PC-9 (cell line): ENCODE measurements at regions of chr4 and their contacts with region 1.

Region 1: GRCh38 chr4:10006231-10006600 is 15.1 kb downstream of the SLC2A9 start:
- DNase-seq: peak; percentile 57 to 96
- H3K4me3 ChIP-seq: peak overlapping the region; percentile 48; the same call in 1 of the 2 replicates
- H3K27ac ChIP-seq: peak overlapping the region; percentile 100
- H3K4me1 ChIP-seq: peaks cover 50% of the 10 kb centered on the region
- H3K27me3 ChIP-seq: no peaks in the 10 kb centered on the region
- CTCF ChIP-seq: no peak

Region 2: DNA sequence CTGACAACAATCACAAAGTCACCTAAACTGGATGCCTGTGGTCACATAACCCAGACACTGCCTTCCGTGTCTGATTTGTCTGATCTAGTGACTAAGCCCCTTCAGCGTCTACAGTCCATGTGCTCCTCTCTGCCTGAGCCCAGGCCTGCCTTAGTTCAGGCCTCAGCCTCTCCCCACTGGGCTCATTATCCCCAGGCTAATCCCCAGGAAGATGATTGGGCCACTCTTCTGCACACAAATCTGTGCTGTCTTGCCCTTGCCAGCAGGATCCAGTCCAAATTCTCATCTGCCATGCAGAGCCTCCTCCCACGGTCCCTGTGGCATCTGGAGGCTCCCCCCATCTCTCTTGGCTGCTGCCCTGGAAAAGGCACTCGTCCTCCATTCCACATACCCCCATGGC is 81.5 kb before region 1 on chr4:
- CTCF ChIA-PET with region 1: no interaction called
- POLR2A ChIA-PET with region 1: no interaction called
- intact Hi-C with region 1: loop called (anchors 5 kb)
- DNase-seq: peak; percentile 3 to 75
- H3K4me3 ChIP-seq: no peak overlapping the region
- H3K27ac ChIP-seq: no peak overlapping the region
- H3K4me1 ChIP-seq: no peaks in the 10 kb centered on the region
- H3K27me3 ChIP-seq: no peaks in the 10 kb centered on the region
- CTCF ChIP-seq: no peak

Region 3: DNA sequence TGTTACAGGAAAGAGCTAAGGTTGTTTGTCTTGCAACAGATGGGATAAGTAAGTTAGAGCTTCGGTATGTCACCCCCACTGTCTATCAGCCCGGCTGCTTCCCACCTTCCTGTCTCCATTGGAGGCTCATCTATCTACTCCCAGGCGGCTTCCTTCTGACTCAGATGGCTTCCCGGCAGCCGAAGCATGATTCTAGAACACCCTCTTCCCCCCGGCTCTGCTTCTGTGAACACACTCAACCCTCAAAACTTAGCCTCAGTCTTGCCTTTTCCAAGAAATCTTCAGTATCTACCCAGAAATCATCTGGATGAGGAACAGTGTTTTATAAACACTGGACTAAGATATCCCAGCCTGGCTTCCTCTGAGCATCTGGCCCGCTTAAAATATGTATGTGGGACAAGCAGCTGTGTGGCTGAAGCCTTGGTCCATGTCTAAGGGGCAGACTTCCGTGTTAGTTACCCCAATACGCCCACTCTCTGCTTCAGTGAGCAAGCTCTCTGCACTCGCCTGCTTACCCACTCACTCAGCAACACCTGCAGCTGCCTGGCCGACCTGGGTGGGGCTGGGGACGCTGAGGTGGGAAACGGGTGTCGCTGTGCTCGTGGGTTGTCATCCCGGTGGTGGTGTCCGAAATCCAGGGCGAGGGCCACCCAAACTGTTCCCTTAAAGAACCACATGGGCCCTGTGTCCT is 27.1 kb after region 1 on chr4:
- CTCF ChIA-PET with region 1: no interaction called
- POLR2A ChIA-PET with region 1: no interaction called
- intact Hi-C with region 1: loop called (anchors 1 kb)
- DNase-seq: peak; percentile 16 to 63
- H3K4me3 ChIP-seq: no peak overlapping the region; the same call in 1 of the 2 replicates
- H3K27ac ChIP-seq: peak overlapping the region; percentile 85
- H3K4me1 ChIP-seq: peaks cover 36% of the 10 kb centered on the region
- H3K27me3 ChIP-seq: no peaks in the 10 kb centered on the region
- CTCF ChIP-seq: no peak

Region 4: DNA sequence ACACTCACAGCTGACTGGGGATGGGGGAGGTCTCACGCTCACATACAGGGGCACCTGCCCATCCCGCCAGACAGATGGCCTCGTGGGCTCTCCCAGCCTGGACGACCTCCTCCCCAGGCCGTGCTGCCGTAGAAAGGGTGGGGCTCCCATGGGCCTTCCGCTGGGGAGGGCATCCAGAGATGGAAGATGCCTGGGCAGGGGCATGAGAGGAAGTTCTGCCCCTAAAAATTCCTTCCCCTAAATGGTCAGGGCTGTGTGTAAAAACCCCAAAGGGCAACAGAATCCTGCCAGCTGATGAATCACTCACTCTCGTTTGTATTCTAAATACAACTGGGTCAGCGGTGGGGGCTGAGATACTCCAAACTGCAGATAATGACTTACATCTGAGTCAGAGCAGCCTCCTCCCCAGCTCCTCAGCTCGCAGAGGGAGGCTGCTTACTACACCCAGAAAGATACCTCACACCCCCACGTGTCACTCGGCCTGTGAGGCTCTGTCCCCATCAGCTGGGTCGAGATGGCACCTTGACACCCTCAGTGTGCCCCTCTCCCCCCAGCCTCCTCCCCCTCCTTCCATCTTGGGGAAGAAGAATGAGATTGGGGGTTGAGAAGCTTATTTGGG is 100.3 kb after region 1 on chr4:
- CTCF ChIA-PET with region 1: no interaction called
- POLR2A ChIA-PET with region 1: no interaction called
- intact Hi-C with region 1: loop called (anchors 5 kb)
- DNase-seq: peak; percentile 76 to 93
- H3K4me3 ChIP-seq: peak overlapping the region; percentile 24; the same call in 1 of the 2 replicates
- H3K27ac ChIP-seq: peak overlapping the region; percentile 67
- H3K4me1 ChIP-seq: peaks cover 26% of the 10 kb centered on the region
- H3K27me3 ChIP-seq: no peaks in the 10 kb centered on the region
- CTCF ChIP-seq: no peak

Region 5: GRCh38 chr4:10173037-10173753 is 167.0 kb after region 1 on chr4:
- CTCF ChIA-PET with region 1: no interaction called
- POLR2A ChIA-PET with region 1: no interaction called
- intact Hi-C with region 1: no loop called
- DNase-seq: peak in 1 of 2 experiments; percentile 46
- H3K4me3 ChIP-seq: no peak overlapping the region
- H3K27ac ChIP-seq: no peak overlapping the region
- H3K4me1 ChIP-seq: no peaks in the 10 kb centered on the region
- H3K27me3 ChIP-seq: no peaks in the 10 kb centered on the region
- CTCF ChIP-seq: no peak